Activated naive CD4-positive, alpha-beta T cell treated with anti-CD3 and anti-CD28 coated beads for 36 hours (primary cell): ENCODE measurements at regions of chr17 and their contacts with region 1.

Region 1: GRCh38 chr17:76523084-76524037 is 14.1 kb downstream of the CYGB start:
- DNase-seq: peak; percentile 84
- H3K4me3 Mint-ChIP-seq: peak overlapping the region; percentile 19
- H3K27ac Mint-ChIP-seq: no peak overlapping the region
- H3K4me1 Mint-ChIP-seq: peaks cover 17% of the 10 kb centered on the region
- H3K27me3 Mint-ChIP-seq: no peaks in the 10 kb centered on the region

Region 2: GRCh38 chr17:76547184-76547641 is 23.9 kb after region 1 on chr17:
- CTCF ChIA-PET with region 1: interaction called, 18 read pairs
- intact Hi-C with region 1: loop called (anchors 1 kb)
- DNase-seq: peak; percentile 66
- H3K4me3 Mint-ChIP-seq: no peak overlapping the region
- H3K27ac Mint-ChIP-seq: no peak overlapping the region
- H3K4me1 Mint-ChIP-seq: peaks cover 5% of the 10 kb centered on the region
- H3K27me3 Mint-ChIP-seq: peaks cover 11% of the 10 kb centered on the region

Region 3: GRCh38 chr17:76567634-76568432 is 44.5 kb after region 1 on chr17:
- CTCF ChIA-PET with region 1: no interaction called
- intact Hi-C with region 1: no loop called
- DNase-seq: no peak
- H3K4me3 Mint-ChIP-seq: no peak overlapping the region
- H3K27ac Mint-ChIP-seq: no peak overlapping the region
- H3K4me1 Mint-ChIP-seq: peaks cover 23% of the 10 kb centered on the region
- H3K27me3 Mint-ChIP-seq: no peaks in the 10 kb centered on the region

Region 4: GRCh38 chr17:76585818-76586593 is 62.6 kb after region 1 on chr17 and contains the start of gene ST6GALNAC2:
- CTCF ChIA-PET with region 1: interaction called, 7 read pairs
- intact Hi-C with region 1: loop called (anchors 1 kb)
- DNase-seq: peak; percentile 49
- H3K4me3 Mint-ChIP-seq: peak within 1 kb of the TSS; percentile 51
- H3K27ac Mint-ChIP-seq: no peak within 1 kb of the TSS
- H3K4me1 Mint-ChIP-seq: peaks cover 8% of the 10 kb centered on the region
- H3K27me3 Mint-ChIP-seq: peaks cover 46% of the 10 kb centered on the region
- total RNA-seq, gene ST6GALNAC2: not detected

Region 5: GRCh38 chr17:76623271-76624146 is 100.1 kb after region 1 on chr17:
- CTCF ChIA-PET with region 1: interaction called, 73 read pairs
- intact Hi-C with region 1: loop called (anchors 1 kb)
- DNase-seq: peak; percentile 83
- H3K4me3 Mint-ChIP-seq: no peak overlapping the region
- H3K27ac Mint-ChIP-seq: no peak overlapping the region
- H3K4me1 Mint-ChIP-seq: peaks cover 7% of the 10 kb centered on the region
- H3K27me3 Mint-ChIP-seq: peaks cover 7% of the 10 kb centered on the region

Region 6: DNA sequence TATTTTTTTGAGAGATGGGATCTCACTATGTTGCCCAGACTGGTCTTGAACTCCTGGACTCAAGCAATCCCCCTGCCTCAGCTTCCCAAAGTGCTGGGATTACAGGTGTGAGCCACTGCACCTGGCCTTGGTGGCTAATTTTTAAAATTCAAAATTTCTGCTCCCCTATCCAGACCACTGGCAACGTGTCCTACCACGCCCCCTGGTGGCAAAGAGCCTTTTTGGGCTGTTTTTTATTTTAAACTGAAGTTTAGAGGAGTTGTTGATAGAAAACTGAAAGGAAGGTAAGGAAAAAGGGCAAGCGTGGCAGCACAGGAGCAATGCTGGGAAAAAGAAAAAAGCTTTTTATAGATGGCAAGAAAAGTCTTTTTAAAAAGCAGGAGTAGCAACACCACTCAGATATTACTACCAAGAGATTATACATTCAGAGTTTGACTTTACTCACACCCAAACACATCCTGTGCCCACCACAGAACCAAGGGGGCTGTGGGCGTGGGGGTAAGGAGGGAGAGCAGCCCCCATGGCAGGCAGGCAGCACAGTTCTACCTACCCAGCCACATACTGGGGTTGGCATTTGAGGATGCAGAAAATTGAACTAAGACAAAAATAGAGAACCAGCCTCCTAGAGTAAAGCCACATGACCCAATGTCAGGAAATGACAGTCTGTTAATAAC is 191.6 kb after region 1 on chr17:
- CTCF ChIA-PET with region 1: interaction called, 6 read pairs
- intact Hi-C with region 1: loop called (anchors 1 kb)
- DNase-seq: peak; percentile 90
- H3K4me3 Mint-ChIP-seq: no peak overlapping the region
- H3K27ac Mint-ChIP-seq: peak overlapping the region; percentile 82
- H3K4me1 Mint-ChIP-seq: peaks cover 32% of the 10 kb centered on the region
- H3K27me3 Mint-ChIP-seq: no peaks in the 10 kb centered on the region